MCF 10A (cell line): ENCODE measurements at regions of chr15 and their contacts with region 1.

Region 1: GRCh38 chr15:55434989-55435825 is 26.9 kb downstream of the PIERCE2 start:
- DNase-seq: peak; percentile 67
- H3K4me3 Mint-ChIP-seq: no peak overlapping the region
- H3K27ac Mint-ChIP-seq: no peak overlapping the region
- H3K4me1 Mint-ChIP-seq: no peaks in the 10 kb centered on the region
- H3K27me3 Mint-ChIP-seq: no peaks in the 10 kb centered on the region
- CTCF ChIP-seq: peak; percentile 64

Region 2: GRCh38 chr15:53811530-53811929 is 1623.7 kb before region 1 on chr15:
- CTCF ChIA-PET with region 1: no interaction called
- POLR2A ChIA-PET with region 1: no interaction called
- intact Hi-C with region 1: loop called (anchors 5 kb)
- DNase-seq: peak; percentile 34
- H3K4me3 Mint-ChIP-seq: no peak overlapping the region
- H3K27ac Mint-ChIP-seq: no peak overlapping the region
- H3K4me1 Mint-ChIP-seq: peaks cover 4% of the 10 kb centered on the region
- H3K27me3 Mint-ChIP-seq: peaks cover 70% of the 10 kb centered on the region
- CTCF ChIP-seq: peak; percentile 21

Region 3: GRCh38 chr15:54792526-54792925 is 642.7 kb before region 1 on chr15:
- CTCF ChIA-PET with region 1: no interaction called
- POLR2A ChIA-PET with region 1: no interaction called
- intact Hi-C with region 1: no loop called
- DNase-seq: no peak
- H3K4me3 Mint-ChIP-seq: no peak overlapping the region
- H3K27ac Mint-ChIP-seq: no peak overlapping the region
- H3K4me1 Mint-ChIP-seq: no peaks in the 10 kb centered on the region
- H3K27me3 Mint-ChIP-seq: peaks cover 7% of the 10 kb centered on the region
- CTCF ChIP-seq: no peak

Region 4: DNA sequence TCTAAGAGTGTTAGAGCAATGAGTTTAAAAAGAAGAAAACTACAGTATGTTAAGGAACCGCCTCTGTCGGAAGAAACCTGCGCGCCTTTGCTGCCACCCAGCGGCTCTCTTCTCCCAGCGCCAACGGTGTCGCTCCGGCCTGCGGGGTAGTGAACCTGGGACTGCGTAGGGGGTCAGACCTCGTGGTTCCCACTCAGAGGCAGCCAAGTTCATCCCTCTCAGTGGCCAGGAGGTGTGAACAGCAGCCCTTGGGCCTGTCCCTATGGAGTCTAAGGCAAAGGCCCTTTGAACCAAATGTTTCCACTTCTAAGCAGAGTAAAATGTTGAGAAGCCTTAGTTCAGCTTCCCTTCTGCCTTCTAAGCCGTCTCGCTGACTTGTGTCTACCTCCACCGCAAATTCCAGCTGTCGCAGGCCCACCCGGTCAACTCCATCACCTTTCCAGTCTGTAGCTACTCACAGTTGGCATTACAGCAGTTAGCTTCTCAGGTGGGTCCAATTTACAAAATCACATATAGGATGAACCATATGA is 144.6 kb before region 1 on chr15:
- CTCF ChIA-PET with region 1: interaction called, 6 read pairs
- POLR2A ChIA-PET with region 1: no interaction called
- intact Hi-C with region 1: loop called (anchors 1 kb)
- DNase-seq: peak; percentile 84
- H3K4me3 Mint-ChIP-seq: peak overlapping the region; percentile 89
- H3K27ac Mint-ChIP-seq: peak overlapping the region; percentile 92
- H3K4me1 Mint-ChIP-seq: peaks cover 15% of the 10 kb centered on the region
- H3K27me3 Mint-ChIP-seq: no peaks in the 10 kb centered on the region
- CTCF ChIP-seq: peak; percentile 84

Region 5: DNA sequence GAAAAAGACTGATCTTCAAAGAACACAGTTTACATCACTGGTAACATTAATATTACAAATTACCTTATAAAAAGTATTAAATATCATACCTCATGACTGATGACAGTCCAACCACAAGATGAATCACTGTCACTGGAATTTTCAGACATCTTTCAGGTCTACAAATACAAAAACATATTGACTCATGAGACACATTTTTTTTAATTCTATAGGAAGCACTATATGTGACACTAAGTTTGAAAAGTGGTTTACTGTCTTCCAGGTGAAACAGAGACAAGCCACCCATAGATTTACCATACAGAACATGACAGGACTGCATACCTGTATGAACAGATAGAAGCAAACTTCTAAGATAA is 46.0 kb before region 1 on chr15:
- CTCF ChIA-PET with region 1: interaction called, 13 read pairs
- POLR2A ChIA-PET with region 1: no interaction called
- intact Hi-C with region 1: no loop called
- DNase-seq: peak; percentile 45
- H3K4me3 Mint-ChIP-seq: no peak overlapping the region
- H3K27ac Mint-ChIP-seq: peak overlapping the region; percentile 75
- H3K4me1 Mint-ChIP-seq: peaks cover 14% of the 10 kb centered on the region
- H3K27me3 Mint-ChIP-seq: no peaks in the 10 kb centered on the region
- CTCF ChIP-seq: no peak

Region 6: DNA sequence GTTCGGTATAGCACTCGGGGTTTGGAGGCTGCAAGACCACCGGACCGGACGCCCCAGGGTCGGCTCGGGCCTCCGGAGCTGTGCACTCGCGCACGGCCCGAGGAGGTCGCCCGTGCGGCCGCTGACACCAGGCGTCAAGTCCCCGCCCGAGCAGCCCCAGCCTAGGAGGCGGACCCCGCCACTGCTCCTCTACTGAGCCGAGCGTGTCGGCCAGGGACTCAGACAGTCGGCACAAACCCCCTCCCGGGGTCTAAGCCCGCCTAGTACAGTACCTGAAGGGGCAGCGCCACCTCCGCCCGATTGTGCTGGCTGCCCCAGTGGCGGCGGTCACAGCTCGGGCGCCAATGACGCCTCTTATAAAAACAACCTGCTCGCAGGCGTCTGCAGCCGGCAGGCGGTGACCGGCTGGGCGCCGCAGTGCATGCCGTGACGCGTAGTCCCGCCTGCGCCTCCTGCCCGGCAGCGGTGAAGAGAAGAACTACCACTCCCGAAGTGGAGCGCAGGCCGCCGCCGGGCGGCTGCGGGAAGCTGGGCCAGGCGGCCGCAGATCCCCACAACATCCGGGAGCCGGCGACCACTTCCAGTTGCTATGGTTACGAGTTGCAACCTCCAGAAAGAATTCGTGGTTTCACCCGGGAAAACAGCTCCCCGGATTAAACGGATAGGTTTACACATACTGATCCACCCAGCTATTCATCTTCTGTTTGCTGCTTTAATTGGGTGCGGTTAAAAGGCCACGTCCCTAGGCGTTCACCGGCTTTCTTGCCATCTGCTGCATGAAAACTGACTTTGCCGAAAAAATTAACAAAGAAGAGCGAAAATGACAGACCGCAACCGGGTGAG is 27.0 kb before region 1 on chr15 and contains the starts of genes CCPG1 and PIERCE2:
- CTCF ChIA-PET with region 1: interaction called, 24 read pairs
- POLR2A ChIA-PET with region 1: interaction called, 11 read pairs
- intact Hi-C with region 1: no loop called
- DNase-seq: peak; percentile 88
- H3K4me3 Mint-ChIP-seq: peak within 1 kb of the TSS; percentile 82
- H3K27ac Mint-ChIP-seq: peak within 1 kb of the TSS; percentile 86
- H3K4me1 Mint-ChIP-seq: peaks cover 13% of the 10 kb centered on the region
- H3K27me3 Mint-ChIP-seq: no peaks in the 10 kb centered on the region
- CTCF ChIP-seq: peak; percentile 55
- total RNA-seq, gene CCPG1: 30.4 and 50.1 TPM in 2 replicates
- total RNA-seq, gene PIERCE2: 3.5 and 5.0 TPM in 2 replicates

Region 7: GRCh38 chr15:55494931-55495330 is 59.7 kb after region 1 on chr15:
- CTCF ChIA-PET with region 1: interaction called, 11 read pairs
- POLR2A ChIA-PET with region 1: no interaction called
- intact Hi-C with region 1: no loop called
- DNase-seq: no peak
- H3K4me3 Mint-ChIP-seq: no peak overlapping the region
- H3K27ac Mint-ChIP-seq: no peak overlapping the region
- H3K4me1 Mint-ChIP-seq: no peaks in the 10 kb centered on the region
- H3K27me3 Mint-ChIP-seq: no peaks in the 10 kb centered on the region
- CTCF ChIP-seq: no peak